ENCODE measurements at regions of chr12 and their contacts with region 1.

Region 1: DNA sequence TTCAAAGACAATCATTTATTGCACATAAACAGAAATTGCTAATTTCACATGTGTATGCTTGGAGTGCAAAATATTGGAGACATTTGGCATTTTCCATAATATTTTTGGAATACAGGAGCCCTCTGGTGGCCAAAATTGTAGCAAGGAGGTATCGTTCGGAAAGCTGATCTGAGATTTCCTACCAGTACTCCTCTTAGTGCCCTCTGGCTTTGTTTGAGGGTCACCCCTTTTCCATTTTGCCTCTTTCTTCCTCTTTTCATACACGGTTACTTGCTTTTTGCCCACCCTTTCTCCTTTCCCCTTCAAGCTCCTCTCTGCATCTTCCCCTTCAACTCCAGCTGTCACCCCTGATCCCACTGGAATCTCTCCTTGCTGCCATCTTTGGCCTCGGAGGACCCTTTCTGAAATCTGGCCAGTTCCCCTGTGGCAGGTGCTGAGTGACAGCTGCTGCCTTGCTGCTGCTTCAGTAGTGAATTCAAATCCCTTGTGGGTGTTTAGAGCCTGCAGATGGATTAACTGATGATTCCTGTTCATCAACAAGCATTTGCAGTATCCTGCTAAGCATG is 164.6 kb upstream of the PARP11 start:
- DNase-seq: peak; percentile 39
- ATAC-seq: peak; percentile 58 to 74

Region 2: DNA sequence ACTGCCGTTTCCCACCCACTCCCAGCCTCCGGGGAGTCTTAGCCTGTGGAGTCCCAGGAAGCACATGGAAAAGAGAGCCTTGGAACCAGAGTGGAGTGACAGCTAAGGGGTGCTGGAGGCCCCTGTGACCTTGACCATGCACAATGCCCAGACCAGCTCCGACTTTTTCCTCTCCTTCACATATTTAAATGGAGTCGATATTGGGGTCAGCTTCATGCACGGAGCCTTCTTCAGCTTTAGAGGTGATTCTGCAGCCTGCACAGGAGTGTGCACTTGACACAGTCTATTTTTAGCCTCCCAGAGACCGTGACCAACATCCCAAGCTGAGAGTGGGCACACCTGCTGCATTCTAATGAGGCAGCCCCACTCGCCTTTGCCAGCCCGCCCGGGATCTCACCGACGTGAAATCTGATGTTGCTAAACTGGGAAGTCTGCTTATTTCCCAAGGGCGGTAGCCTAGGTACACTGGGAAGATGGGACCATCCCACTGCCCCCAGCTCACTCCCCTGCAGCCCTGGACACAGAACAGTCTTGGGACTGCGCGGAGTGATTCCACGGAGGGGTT is 499.3 kb before region 1 on chr12:
- intact Hi-C with region 1: no loop called
- DNase-seq: no peak
- ATAC-seq: peak in 1 of 2 donors; percentile 31

Region 3: GRCh38 chr12:3885277-3886094 is 152.3 kb before region 1 on chr12:
- intact Hi-C with region 1: loop called (anchors 2 to 10 kb)
- DNase-seq: no peak
- ATAC-seq: peak in 1 of 2 donors; percentile 27

Region 4: GRCh38 chr12:3998968-3999826 is 38.6 kb before region 1 on chr12:
- intact Hi-C with region 1: loop called in 1 of 2 experiments (anchors 5 kb)
- DNase-seq: no peak
- ATAC-seq: peak in 1 of 2 donors; percentile 80

Region 5: DNA sequence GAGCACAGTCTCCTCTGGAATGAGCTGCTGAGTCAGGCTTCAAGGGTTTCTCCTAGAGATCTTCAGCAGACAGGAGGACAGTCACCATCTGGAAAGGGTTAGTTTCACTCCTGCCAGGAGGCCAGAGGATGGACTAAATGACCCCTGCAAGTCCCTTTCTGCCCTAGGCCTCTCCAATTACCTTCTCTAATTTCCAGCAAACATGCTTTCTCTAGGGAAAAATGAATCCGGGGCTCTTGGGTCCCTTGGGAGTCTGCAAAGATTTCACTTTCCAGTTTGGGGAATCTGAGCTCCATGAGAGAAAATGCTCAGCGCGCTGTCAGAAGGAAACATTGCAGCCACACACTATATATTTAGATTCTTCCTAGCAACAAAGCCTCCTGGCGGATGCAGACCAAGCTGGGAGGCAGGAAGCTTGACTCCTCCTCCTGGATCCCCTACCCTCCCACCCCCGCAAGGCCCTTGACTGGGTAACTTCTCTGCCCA is 51.3 kb after region 1 on chr12:
- intact Hi-C with region 1: no loop called
- DNase-seq: no peak
- ATAC-seq: no peak

Region 6: DNA sequence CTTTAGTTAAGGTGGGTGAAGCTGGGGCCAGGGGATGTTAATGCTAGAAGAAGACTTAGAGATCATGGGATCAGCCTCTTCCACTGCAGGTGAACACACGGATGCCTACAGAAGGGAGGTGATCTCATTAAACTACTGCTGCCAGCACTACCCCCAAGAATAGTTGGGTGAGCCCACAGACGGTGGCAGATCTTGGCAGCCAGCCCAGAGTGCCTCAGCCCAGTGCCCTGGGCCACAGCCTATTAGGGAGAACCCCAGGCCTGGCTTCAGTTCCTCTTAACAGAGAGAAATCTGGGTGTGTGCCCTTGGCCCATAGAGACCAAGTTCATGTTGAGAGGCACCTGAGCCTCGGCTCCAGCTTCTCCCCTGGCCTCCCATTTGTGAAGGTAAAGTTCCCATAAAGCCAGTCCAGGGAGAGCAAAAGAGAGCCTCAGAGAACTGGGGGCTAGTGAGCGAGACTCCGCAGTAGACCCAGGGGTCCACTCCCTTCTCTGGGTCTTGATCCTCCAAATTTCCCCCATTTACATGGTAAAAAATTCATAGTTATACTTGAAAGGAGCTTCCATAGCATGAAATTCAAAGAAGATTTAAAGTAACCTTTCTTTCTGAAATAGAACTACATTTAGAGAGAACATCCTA is 110.7 kb after region 1 on chr12:
- intact Hi-C with region 1: no loop called
- DNase-seq: peak; percentile 50
- ATAC-seq: peak in 1 of 2 donors; percentile 64